ENCODE measurements at regions of chr12 and their contacts with region 1.

Region 1: DNA sequence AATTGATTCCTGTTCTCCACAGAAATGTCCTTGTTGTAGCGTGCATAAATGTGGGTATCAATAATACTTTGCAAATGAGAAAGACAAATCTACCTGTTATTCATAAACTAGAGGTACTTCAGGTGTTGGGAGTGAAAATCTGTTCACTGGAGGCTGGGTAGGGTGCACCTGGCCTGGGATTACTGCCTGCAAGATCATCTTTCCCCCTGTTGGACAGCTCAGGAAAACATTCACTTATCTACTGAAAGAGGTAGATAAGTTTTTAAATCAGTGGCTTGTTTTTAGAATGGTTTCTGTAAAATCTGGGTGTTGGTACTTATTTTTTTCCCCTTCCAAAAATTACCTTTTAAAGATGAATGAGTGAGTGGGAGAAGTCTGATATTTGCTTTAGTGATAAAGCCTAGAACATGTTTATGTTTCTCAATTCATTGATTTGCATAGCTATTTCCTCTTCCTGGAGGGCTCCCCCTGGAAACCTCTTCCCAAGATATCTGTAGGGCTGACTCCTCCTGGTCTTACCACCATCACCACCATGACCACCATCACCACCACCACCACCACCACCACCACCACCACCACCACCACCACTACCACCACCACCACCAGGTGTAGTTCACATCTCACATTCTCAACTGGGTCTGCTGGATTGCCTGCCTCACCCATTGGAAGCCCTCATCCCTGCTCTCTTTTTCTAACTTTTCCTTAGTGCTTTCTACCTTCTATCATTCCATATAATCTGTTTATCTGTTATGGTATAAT is 95.7 kb downstream of the DIP2B start:
- DNase-seq: no peak
- H3K4me3 ChIP-seq: no peak overlapping the region
- H3K27me3 ChIP-seq: no peaks in the 10 kb centered on the region
- CTCF ChIP-seq: no peak

Region 2: GRCh38 chr12:50715174-50715573 is 114.6 kb after region 1 on chr12:
- CTCF ChIA-PET with region 1: no interaction called
- POLR2A ChIA-PET with region 1: no interaction called
- DNase-seq: no peak
- H3K4me3 ChIP-seq: no peak overlapping the region
- H3K27me3 ChIP-seq: no peaks in the 10 kb centered on the region
- CTCF ChIP-seq: no peak

Region 3: DNA sequence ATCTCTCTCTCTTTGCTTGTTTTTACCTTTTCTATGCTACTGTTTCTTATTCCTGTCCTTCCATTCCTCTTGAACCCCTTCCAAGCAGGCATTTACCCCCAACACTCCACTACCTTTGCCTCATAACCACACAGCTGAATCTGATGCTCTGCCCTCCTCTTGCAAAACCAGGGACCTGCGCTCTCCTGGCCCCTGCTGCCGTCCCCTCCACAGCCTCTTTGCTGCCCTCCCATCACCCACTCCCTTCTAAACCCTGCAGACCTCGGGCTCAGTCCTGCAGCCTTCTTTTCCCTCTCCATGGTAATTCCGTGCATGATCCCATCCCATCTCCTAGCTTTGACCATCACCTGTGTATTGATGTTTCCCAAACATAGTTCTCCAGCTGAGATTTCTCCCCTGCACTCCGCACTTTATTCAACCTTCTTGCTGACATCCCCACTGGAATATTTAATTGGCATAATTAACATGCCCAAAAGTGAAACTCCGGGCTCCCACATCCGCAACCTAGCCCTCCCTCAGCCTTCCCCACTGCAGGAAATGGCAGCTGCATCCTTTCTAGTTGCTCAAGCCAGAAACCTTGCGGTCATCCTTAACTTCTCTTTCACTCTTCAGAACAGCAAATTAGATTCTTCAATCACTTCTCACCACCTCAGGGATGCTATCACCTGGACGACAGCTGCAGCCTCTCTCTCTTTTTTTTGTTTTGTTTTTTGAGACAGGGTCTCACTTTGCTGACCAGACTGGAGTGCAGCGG is 1232.0 kb after region 1 on chr12:
- CTCF ChIA-PET with region 1: no interaction called
- POLR2A ChIA-PET with region 1: interaction called, 11 read pairs
- DNase-seq: no peak
- H3K4me3 ChIP-seq: no peak overlapping the region
- H3K27me3 ChIP-seq: peaks cover 25% of the 10 kb centered on the region
- CTCF ChIP-seq: no peak